ENCODE measurements at regions of chr6 and their contacts with region 1.

Region 1: DNA sequence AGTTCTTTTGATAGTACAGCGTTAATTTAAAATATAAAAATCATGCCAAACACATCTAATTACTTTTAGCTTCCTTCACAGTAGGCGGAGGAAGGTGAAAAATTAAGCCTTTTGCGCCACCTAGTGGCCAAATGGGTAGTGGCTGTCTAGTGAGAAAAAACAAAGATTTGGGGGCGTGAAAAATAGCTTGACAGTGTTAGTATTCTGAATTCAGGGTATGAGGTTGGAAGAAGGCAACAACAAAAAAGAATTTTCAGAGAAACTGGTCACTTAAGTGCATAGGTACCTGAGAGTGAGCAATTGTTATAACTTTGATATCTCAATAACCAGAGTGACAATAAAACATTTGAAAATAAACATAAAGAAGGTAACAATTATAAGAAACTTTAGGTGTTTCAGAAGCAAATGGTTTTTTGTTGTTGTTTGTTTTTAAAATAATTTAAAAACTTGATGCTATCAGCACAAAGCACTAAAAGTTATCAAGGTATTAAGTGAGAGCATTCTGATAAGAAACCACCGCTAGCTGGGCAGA is 14.3 kb downstream of the PSMB9 start:
- DNase-seq: peak; percentile 78
- ATAC-seq: peak; percentile 90
- H3K4me3 ChIP-seq: no peak overlapping the region
- H3K27ac ChIP-seq: no peak overlapping the region
- H3K4me1 ChIP-seq: no peaks in the 10 kb centered on the region
- H3K27me3 ChIP-seq: no peaks in the 10 kb centered on the region
- CTCF ChIP-seq: peak; percentile 92

Region 2: DNA sequence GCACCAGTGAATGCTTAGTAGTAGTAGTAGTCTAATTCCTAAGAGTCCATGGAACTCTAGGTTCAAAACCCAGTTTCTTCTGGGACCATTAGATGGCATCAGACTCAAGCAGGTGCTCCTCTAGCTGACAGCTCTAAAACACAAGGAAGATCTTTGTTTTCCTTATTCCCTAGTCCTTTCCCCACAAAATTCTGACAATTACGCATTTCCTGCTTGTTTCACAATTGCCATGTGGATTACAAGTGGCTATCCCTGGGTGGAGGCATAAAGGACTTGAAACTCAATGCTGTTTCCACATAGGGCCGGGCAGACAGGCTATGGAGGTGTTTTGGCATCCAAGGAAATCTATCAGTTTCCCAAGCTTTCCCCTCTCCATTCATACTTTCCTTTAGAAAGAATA is 42.4 kb before region 1 on chr6:
- intact Hi-C with region 1: loop called (anchors 5 kb)
- DNase-seq: no peak
- ATAC-seq: peak; percentile 61
- H3K4me3 ChIP-seq: no peak overlapping the region
- H3K27ac ChIP-seq: no peak overlapping the region
- H3K4me1 ChIP-seq: no peaks in the 10 kb centered on the region
- H3K27me3 ChIP-seq: no peaks in the 10 kb centered on the region
- CTCF ChIP-seq: peak; percentile 41

Region 3: GRCh38 chr6:32971581-32972352 is 103.4 kb after region 1 on chr6:
- intact Hi-C with region 1: no loop called
- DNase-seq: peak; percentile 99
- ATAC-seq: peak; percentile 69
- H3K4me3 ChIP-seq: peak overlapping the region; percentile 74
- H3K27ac ChIP-seq: peak overlapping the region; percentile 99
- H3K4me1 ChIP-seq: peaks cover 30% of the 10 kb centered on the region
- H3K27me3 ChIP-seq: no peaks in the 10 kb centered on the region
- CTCF ChIP-seq: no peak

Measured in upper lobe of right lung (tissue), 1 donor.